ENCODE measurements at regions of chr1 and their contacts with region 1.

Region 1: GRCh38 chr1:203754455-203754864 is 10.5 kb upstream of the LAX1 start:
- DNase-seq: no peak
- H3K4me3 Mint-ChIP-seq: no peak overlapping the region
- H3K27ac Mint-ChIP-seq: peak overlapping the region; percentile 4
- H3K4me1 Mint-ChIP-seq: peaks cover 26% of the 10 kb centered on the region
- H3K27me3 Mint-ChIP-seq: no peaks in the 10 kb centered on the region
- CTCF ChIP-seq: no peak

Region 2: DNA sequence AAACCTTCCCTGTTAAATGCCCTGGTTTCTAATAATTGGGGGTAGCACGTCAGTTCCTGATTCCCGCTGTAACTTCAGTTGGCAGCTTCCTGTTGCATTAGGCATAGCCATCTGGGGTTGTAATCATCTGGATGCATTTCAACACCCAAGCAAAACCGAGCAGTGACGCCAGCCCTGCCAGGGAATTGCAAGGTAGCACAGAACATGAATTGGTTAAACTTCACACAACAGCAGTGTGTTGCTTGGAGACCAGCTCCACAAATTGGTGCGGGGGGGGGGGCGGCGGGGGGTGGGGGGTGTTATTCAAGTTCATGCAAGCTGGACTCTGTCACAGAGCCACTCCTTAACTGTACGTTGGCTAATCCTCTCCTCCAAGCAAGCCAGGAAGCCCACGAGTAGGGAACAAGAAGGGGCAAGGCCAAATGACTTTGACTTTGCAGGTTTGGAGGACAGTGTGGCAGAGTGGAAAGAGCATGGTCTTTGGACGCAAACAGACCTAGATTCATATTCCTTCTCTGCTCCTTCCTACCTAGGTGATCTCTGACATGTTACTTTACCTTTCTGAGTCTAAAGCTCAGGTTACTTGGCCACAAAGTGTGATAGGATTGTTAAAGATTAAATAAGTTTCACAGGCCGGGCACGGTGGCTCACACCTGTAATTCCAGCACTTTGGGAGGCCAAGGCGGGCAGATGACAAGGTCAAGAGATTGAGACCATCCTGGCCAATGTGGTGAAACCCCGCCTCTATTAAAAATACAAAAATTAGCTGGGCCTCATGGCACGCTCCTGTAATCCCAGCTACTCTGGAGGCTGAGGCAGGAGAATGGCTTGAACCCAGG is 15.3 kb after region 1 on chr1:
- CTCF ChIA-PET with region 1: interaction called, 4 read pairs
- POLR2A ChIA-PET with region 1: interaction called, 30 read pairs
- intact Hi-C with region 1: loop called (anchors 2 kb)
- DNase-seq: peak; percentile 99
- H3K4me3 Mint-ChIP-seq: peak overlapping the region; percentile 63
- H3K27ac Mint-ChIP-seq: peak overlapping the region; percentile 88
- H3K4me1 Mint-ChIP-seq: peaks cover 32% of the 10 kb centered on the region
- H3K27me3 Mint-ChIP-seq: no peaks in the 10 kb centered on the region
- CTCF ChIP-seq: no peak

Measured in MCF 10A (cell line).